Prostate gland (tissue), 2 donors: ENCODE measurements at regions of chr16 and their contacts with region 1.

Region 1: GRCh38 chr16:67279296-67280089 is at the start of gene PLEKHG4:
- DNase-seq: peak; percentile 55
- H3K4me3 ChIP-seq: peak within 1 kb of the TSS; percentile 44 to 48
- H3K27ac ChIP-seq: peak within 1 kb of the TSS; percentile 1 to 22
- H3K4me1 ChIP-seq: peaks cover 4% of the 10 kb centered on the region
- H3K27me3 ChIP-seq: no peaks in the 10 kb centered on the region
- CTCF ChIP-seq: peak; percentile 72 to 91 (median 80)
- POLR2A ChIP-seq: no peak
- total RNA-seq, gene PLEKHG4: 7.7 to 57.8 TPM

Region 2: GRCh38 chr16:67226804-67227557 is 52.5 kb before region 1 on chr16 and contains the start of gene TMEM208:
- intact Hi-C with region 1: no loop called
- DNase-seq: peak; percentile 95
- H3K4me3 ChIP-seq: peak within 1 kb of the TSS; percentile 82 to 91
- H3K27ac ChIP-seq: peak within 1 kb of the TSS; percentile 61 to 73
- H3K4me1 ChIP-seq: no peaks in the 10 kb centered on the region
- H3K27me3 ChIP-seq: no peaks in the 10 kb centered on the region
- CTCF ChIP-seq: peak in 3 of 4 experiments; percentile 14 to 58 (median 52)
- POLR2A ChIP-seq: peak; percentile 70
- total RNA-seq, gene TMEM208: 39.1 to 57.1 TPM

Region 3: GRCh38 chr16:67393035-67393787 is 113.7 kb after region 1 on chr16 and contains the start of gene TPPP3:
- intact Hi-C with region 1: loop called (anchors 10 kb)
- DNase-seq: no peak
- H3K4me3 ChIP-seq: peak within 1 kb of the TSS; percentile 15 to 20
- H3K27ac ChIP-seq: peak within 1 kb of the TSS; percentile 12 to 49
- H3K4me1 ChIP-seq: peaks cover 14% of the 10 kb centered on the region
- H3K27me3 ChIP-seq: no peaks in the 10 kb centered on the region
- CTCF ChIP-seq: peak in 3 of 4 experiments; percentile 29 to 68 (median 58)
- POLR2A ChIP-seq: peak; percentile 17
- total RNA-seq, gene TPPP3: 3.4 to 10.0 TPM

Region 4: GRCh38 chr16:67595033-67595355 is 315.5 kb after region 1 on chr16:
- intact Hi-C with region 1: no loop called
- DNase-seq: no peak
- H3K4me3 ChIP-seq: no peak overlapping the region
- H3K27ac ChIP-seq: no peak overlapping the region
- H3K4me1 ChIP-seq: no peaks in the 10 kb centered on the region
- H3K27me3 ChIP-seq: no peaks in the 10 kb centered on the region
- CTCF ChIP-seq: no peak
- POLR2A ChIP-seq: no peak